ENCODE measurements at regions of chr2 and their contacts with region 1.

Region 1: GRCh38 chr2:177489719-177490301 is 97.2 kb downstream of the AGPS start:
- DNase-seq: no peak
- H3K4me3 ChIP-seq: no peak overlapping the region
- H3K27ac ChIP-seq: no peak overlapping the region
- H3K4me1 ChIP-seq: no peaks in the 10 kb centered on the region
- H3K27me3 ChIP-seq: no peaks in the 10 kb centered on the region
- CTCF ChIP-seq: peak; percentile 31 to 65 (median 54)
- EP300 ChIP-seq: no peak
- POLR2A ChIP-seq: no peak

Region 2: DNA sequence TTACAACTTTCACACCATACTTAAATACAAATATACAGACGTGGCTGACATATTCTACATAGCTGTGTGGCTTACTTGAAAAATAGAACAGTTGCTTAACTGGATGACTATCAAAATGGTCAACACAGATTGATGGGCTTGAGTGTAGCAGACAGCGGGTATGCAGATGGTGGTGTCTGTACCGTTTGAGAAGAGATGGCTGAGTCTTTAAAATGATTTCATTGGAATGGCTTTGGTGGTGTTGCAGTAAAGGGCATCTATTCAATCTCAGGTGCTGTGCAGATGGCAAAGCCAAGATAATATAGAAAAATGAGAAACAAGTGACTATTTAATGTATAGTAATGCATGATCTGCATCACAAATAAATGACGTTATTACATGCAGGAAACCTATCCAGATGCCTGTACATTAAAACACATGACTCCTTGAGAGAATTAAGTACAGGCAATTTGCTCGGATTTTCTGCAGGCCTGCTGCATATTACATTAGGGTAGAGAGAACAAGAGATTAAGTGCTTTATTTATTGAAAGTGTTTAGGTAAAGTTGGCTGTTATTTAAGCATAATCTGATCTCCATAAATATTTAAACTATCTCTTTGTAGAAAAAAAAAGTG is 28.7 kb before region 1 on chr2:
- intact Hi-C with region 1: no loop called
- DNase-seq: no peak
- H3K4me3 ChIP-seq: no peak overlapping the region
- H3K27ac ChIP-seq: no peak overlapping the region
- H3K4me1 ChIP-seq: no peaks in the 10 kb centered on the region
- H3K27me3 ChIP-seq: no peaks in the 10 kb centered on the region
- CTCF ChIP-seq: no peak
- EP300 ChIP-seq: no peak
- POLR2A ChIP-seq: no peak

Region 3: DNA sequence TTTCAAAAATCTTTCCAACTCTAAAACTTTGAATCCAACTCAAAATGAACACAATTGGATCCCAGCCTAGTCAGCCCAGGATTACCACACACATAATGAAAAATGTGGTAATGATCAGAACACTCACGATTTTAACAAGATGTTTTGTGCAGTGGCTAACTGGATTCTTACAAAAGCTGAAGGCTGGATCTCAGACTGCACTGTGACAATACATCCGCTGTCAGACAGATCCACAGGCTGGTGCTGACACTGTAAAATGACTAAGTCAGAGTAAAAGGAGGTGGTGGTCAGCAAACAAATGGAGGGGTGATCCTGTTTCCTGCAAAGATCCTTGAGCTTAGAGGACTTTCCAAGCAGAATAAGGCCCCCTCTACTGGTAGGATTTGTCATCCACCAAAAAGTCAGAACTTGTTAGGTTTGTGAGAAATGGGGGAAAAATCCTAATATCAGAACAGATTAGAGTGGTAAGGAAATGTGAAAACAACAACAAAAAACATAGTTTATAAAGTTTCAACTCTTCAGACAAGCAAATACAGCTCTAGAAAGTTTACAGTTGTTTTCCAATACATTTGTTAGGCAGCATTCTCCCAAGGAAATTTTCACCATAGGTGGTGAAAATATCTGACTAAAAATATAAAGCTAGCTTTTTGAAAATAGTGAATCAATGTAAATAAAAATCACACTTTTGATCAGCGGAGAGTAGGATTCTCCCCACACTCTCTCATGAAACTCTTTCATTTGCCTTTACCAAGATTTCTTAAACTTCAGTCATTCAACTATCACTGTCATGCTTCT is 114.7 kb after region 1 on chr2:
- intact Hi-C with region 1: loop called (anchors 2 kb)
- DNase-seq: no peak
- H3K4me3 ChIP-seq: no peak overlapping the region
- H3K27ac ChIP-seq: peak overlapping the region; percentile 9 to 45 (median 31)
- H3K4me1 ChIP-seq: peaks cover 0 to 15% (median under 1%) of the 10 kb centered on the region in 4 donors
- H3K27me3 ChIP-seq: no peaks in the 10 kb centered on the region
- CTCF ChIP-seq: peak; percentile 38 to 68 (median 56)
- EP300 ChIP-seq: no peak
- POLR2A ChIP-seq: no peak

Region 4: DNA sequence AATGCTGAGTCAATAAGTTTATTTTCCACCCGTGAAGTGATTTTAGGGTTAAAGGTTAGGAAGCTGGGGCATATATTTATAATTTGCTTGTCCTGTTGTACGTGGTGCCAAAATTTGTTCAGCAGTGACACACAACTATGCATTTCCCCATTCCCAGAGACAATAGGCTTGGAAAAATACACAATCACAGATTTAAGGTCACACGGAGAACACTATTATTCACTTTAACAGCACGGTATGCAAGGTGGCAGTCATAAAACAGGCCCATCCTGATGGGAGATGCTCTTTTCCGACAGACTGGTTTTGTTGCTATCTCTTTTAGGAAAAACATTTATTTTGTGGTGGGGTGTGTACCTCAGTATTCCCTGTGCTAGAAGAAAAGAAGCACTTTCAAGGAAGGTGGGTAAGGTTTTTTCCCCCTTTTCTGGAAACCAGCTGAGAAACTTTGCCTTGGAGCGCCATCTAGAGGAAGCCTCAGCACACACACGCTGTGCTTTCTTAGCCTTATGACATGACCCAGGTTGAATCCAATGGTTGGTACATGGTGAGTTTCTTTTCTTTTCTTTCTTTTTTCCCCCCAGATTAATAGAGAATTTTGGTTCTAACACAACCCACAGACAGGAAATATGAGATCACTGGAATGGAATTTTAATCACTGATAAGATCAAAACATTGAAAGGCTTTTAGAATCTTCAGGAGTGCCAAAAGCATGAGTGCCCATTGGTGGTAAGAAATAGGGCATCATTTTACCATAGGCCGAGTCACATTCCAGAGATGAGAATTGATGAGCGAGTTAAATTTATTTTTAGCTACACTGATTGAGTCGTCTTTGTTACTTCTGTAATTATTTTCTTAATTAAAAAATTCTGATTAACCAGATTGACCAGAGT is 234.8 kb after region 1 on chr2:
- intact Hi-C with region 1: loop called (anchors 2 kb)
- DNase-seq: peak; percentile 65
- H3K4me3 ChIP-seq: no peak overlapping the region
- H3K27ac ChIP-seq: no peak overlapping the region
- H3K4me1 ChIP-seq: peaks cover 0 to 6% (median 0%) of the 10 kb centered on the region in 4 donors
- H3K27me3 ChIP-seq: no peaks in the 10 kb centered on the region
- CTCF ChIP-seq: peak; percentile 66 to 82 (median 74)
- EP300 ChIP-seq: no peak
- POLR2A ChIP-seq: no peak

Region 5: GRCh38 chr2:177758591-177759371 is 269.0 kb after region 1 on chr2:
- intact Hi-C with region 1: loop called (anchors 10 kb)
- DNase-seq: no peak
- H3K4me3 ChIP-seq: no peak overlapping the region
- H3K27ac ChIP-seq: peak overlapping the region in 1 of 4 donors; percentile 23
- H3K4me1 ChIP-seq: peaks cover 0 to 26% (median 20%) of the 10 kb centered on the region in 4 donors
- H3K27me3 ChIP-seq: no peaks in the 10 kb centered on the region
- CTCF ChIP-seq: peak; percentile 13 to 46 (median 33)
- EP300 ChIP-seq: no peak
- POLR2A ChIP-seq: no peak